Activated naive CD4-positive, alpha-beta T cell treated with anti-CD3 and anti-CD28 coated beads for 36 hours (primary cell): ENCODE measurements at regions of chr22 and their contacts with region 1.

Region 1: GRCh38 chr22:31313366-31314147 is 21.3 kb upstream of the PIK3IP1 start:
- DNase-seq: peak; percentile 87
- H3K4me3 Mint-ChIP-seq: no peak overlapping the region
- H3K27ac Mint-ChIP-seq: peak overlapping the region; percentile 12
- H3K4me1 Mint-ChIP-seq: peaks cover 27% of the 10 kb centered on the region
- H3K27me3 Mint-ChIP-seq: no peaks in the 10 kb centered on the region

Region 2: GRCh38 chr22:31089160-31090100 is 224.1 kb before region 1 on chr22:
- CTCF ChIA-PET with region 1: interaction called, 4 read pairs
- intact Hi-C with region 1: loop called (anchors 2 kb)
- DNase-seq: no peak
- H3K4me3 Mint-ChIP-seq: no peak overlapping the region
- H3K27ac Mint-ChIP-seq: no peak overlapping the region
- H3K4me1 Mint-ChIP-seq: peaks cover 2% of the 10 kb centered on the region
- H3K27me3 Mint-ChIP-seq: no peaks in the 10 kb centered on the region

Region 3: DNA sequence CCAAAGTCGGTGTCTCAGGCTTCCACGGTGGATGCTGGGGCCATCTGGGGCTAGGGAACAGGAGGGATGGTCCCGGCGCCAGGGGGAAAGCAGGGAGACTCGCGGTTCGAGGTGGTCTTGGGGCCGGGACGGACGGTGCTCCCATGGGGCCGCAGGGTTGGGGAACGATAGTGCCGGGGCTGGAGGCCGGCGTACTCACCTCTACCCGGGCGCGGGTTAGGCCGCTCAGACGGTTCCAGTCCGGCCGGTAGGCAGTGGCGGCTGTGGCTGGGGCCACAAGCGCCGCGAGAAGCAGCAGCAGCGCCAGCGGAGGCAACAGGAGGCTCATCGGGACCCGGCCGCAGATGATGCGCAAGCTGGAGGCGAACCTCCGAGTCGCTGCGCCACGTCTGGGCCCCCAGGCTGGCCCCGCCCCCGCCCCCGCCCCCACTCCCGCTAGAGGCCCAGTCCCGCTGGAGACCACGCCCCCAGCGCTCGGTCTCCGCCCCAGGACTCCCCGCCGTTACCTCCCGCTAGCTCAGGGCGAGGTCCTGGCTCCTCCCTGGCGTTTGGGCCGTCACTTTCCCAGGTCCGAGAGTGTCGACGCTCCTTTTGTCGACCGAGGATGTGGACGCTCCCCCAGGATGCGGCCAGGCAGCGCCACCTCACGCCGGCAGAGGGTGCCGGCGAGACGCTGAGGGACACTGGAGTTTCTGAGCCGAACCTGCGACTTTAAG is 206.2 kb before region 1 on chr22 and contains the start of gene SELENOM:
- CTCF ChIA-PET with region 1: interaction called, 15 read pairs
- intact Hi-C with region 1: loop called (anchors 1 kb)
- DNase-seq: peak; percentile 92
- H3K4me3 Mint-ChIP-seq: peak within 1 kb of the TSS; percentile 89
- H3K27ac Mint-ChIP-seq: peak within 1 kb of the TSS; percentile 76
- H3K4me1 Mint-ChIP-seq: peaks cover 19% of the 10 kb centered on the region
- H3K27me3 Mint-ChIP-seq: no peaks in the 10 kb centered on the region
- total RNA-seq, gene SELENOM: 9.3 to 11.0 TPM

Region 4: DNA sequence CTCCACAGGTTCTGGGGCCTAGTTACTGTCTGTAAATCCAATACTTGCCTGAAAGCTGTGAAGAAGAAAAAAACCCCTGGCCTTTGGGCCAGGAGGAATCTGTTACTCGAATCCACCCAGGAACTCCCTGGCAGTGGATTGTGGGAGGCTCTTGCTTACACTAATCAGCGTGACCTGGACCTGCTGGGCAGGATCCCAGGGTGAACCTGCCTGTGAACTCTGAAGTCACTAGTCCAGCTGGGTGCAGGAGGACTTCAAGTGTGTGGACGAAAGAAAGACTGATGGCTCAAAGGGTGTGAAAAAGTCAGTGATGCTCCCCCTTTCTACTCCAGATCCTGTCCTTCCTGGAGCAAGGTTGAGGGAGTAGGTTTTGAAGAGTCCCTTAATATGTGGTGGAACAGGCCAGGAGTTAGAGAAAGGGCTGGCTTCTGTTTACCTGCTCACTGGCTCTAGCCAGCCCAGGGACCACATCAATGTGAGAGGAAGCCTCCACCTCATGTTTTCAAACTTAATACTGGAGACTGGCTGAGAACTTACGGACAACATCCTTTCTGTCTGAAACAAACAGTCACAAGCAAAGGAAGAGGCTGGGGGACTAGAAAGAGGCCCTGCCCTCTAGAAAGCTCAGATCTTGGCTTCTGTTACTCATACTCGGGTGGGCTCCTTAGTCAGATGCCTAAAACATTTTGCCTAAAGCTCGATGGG is 34.8 kb before region 1 on chr22:
- CTCF ChIA-PET with region 1: interaction called, 12 read pairs
- intact Hi-C with region 1: loop called (anchors 2 kb)
- DNase-seq: peak; percentile 69
- H3K4me3 Mint-ChIP-seq: peak overlapping the region; percentile 18
- H3K27ac Mint-ChIP-seq: peak overlapping the region; percentile 94
- H3K4me1 Mint-ChIP-seq: peaks cover 86% of the 10 kb centered on the region
- H3K27me3 Mint-ChIP-seq: no peaks in the 10 kb centered on the region

Region 5: GRCh38 chr22:31295831-31296657 is 17.5 kb before region 1 on chr22:
- CTCF ChIA-PET with region 1: interaction called, 49 read pairs
- intact Hi-C with region 1: loop called (anchors 1 kb)
- DNase-seq: no peak
- H3K4me3 Mint-ChIP-seq: peak overlapping the region; percentile 57
- H3K27ac Mint-ChIP-seq: peak overlapping the region; percentile 76
- H3K4me1 Mint-ChIP-seq: peaks cover 59% of the 10 kb centered on the region
- H3K27me3 Mint-ChIP-seq: no peaks in the 10 kb centered on the region

Region 6: GRCh38 chr22:31302006-31302405 is 11.6 kb before region 1 on chr22:
- CTCF ChIA-PET with region 1: interaction called, 49 read pairs
- intact Hi-C with region 1: no loop called
- DNase-seq: no peak
- H3K4me3 Mint-ChIP-seq: no peak overlapping the region
- H3K27ac Mint-ChIP-seq: no peak overlapping the region
- H3K4me1 Mint-ChIP-seq: peaks cover 32% of the 10 kb centered on the region
- H3K27me3 Mint-ChIP-seq: no peaks in the 10 kb centered on the region

Region 7: GRCh38 chr22:31337161-31337560 is 23.6 kb after region 1 on chr22:
- CTCF ChIA-PET with region 1: interaction called, 11 read pairs
- intact Hi-C with region 1: no loop called
- DNase-seq: peak; percentile 48
- H3K4me3 Mint-ChIP-seq: no peak overlapping the region
- H3K27ac Mint-ChIP-seq: peak overlapping the region; percentile 54
- H3K4me1 Mint-ChIP-seq: peaks cover 71% of the 10 kb centered on the region
- H3K27me3 Mint-ChIP-seq: no peaks in the 10 kb centered on the region

Region 8: GRCh38 chr22:31449506-31449905 is 135.9 kb after region 1 on chr22:
- CTCF ChIA-PET with region 1: no interaction called
- intact Hi-C with region 1: no loop called
- DNase-seq: no peak
- H3K4me3 Mint-ChIP-seq: no peak overlapping the region
- H3K27ac Mint-ChIP-seq: no peak overlapping the region
- H3K4me1 Mint-ChIP-seq: no peaks in the 10 kb centered on the region
- H3K27me3 Mint-ChIP-seq: no peaks in the 10 kb centered on the region